ENCODE measurements at regions of chr1 and their contacts with region 1.

Region 1: GRCh38 chr1:27979151-27979858 is 19.5 kb downstream of the XKR8 start:
- DNase-seq: peak; percentile 82 to 89 (median 88)
- H3K4me3 ChIP-seq: no peak overlapping the region
- H3K27ac ChIP-seq: peak overlapping the region in 1 of 2 experiments; percentile 72
- H3K4me1 ChIP-seq: peaks cover 0 to 9% (median 4%) of the 10 kb centered on the region in 4 experiments
- H3K27me3 ChIP-seq: no peaks in the 10 kb centered on the region

Region 2: GRCh38 chr1:27858072-27858958 is 121.0 kb before region 1 on chr1:
- CTCF ChIA-PET with region 1: interaction called, 43 read pairs
- POLR2A ChIA-PET with region 1: interaction called, 3 read pairs
- DNase-seq: peak; percentile 80 to 90 (median 85)
- H3K4me3 ChIP-seq: peak overlapping the region in 1 of 7 experiments; percentile 42
- H3K27ac ChIP-seq: no peak overlapping the region
- H3K4me1 ChIP-seq: peaks cover 0 to 25% (median 16%) of the 10 kb centered on the region in 4 experiments
- H3K27me3 ChIP-seq: no peaks in the 10 kb centered on the region

Region 3: GRCh38 chr1:27940297-27940696 is 39.0 kb before region 1 on chr1:
- CTCF ChIA-PET with region 1: interaction called, 11 read pairs
- POLR2A ChIA-PET with region 1: no interaction called
- DNase-seq: peak; percentile 73 to 86 (median 85)
- H3K4me3 ChIP-seq: no peak overlapping the region
- H3K27ac ChIP-seq: peak overlapping the region in 1 of 2 experiments; percentile 54
- H3K4me1 ChIP-seq: peaks cover 0 to 29% (median 15%) of the 10 kb centered on the region in 4 experiments
- H3K27me3 ChIP-seq: no peaks in the 10 kb centered on the region

Region 4: GRCh38 chr1:27959400-27960217 is 19.7 kb before region 1 on chr1 and contains the start of gene XKR8:
- CTCF ChIA-PET with region 1: interaction called, 40 read pairs
- POLR2A ChIA-PET with region 1: no interaction called
- DNase-seq: peak; percentile 82 to 91 (median 91)
- H3K4me3 ChIP-seq: peak within 1 kb of the TSS; percentile 49 to 93 (median 82)
- H3K27ac ChIP-seq: peak within 1 kb of the TSS; percentile 46 to 83
- H3K4me1 ChIP-seq: peaks cover 2 to 33% (median 23%) of the 10 kb centered on the region in 4 experiments
- H3K27me3 ChIP-seq: no peaks in the 10 kb centered on the region

Region 5: GRCh38 chr1:27992276-27992675 is 13.0 kb after region 1 on chr1:
- CTCF ChIA-PET with region 1: interaction called, 28 read pairs
- POLR2A ChIA-PET with region 1: no interaction called
- DNase-seq: peak; percentile 30 to 66 (median 47)
- H3K4me3 ChIP-seq: peak overlapping the region in 1 of 7 experiments; percentile 12
- H3K27ac ChIP-seq: peak overlapping the region in 1 of 2 experiments; percentile 73
- H3K4me1 ChIP-seq: peaks cover 8 to 29% (median 18%) of the 10 kb centered on the region in 4 experiments
- H3K27me3 ChIP-seq: no peaks in the 10 kb centered on the region